Endothelial cell of umbilical vein (primary cell): ENCODE measurements at regions of chr3 and their contacts with region 1.

Region 1: DNA sequence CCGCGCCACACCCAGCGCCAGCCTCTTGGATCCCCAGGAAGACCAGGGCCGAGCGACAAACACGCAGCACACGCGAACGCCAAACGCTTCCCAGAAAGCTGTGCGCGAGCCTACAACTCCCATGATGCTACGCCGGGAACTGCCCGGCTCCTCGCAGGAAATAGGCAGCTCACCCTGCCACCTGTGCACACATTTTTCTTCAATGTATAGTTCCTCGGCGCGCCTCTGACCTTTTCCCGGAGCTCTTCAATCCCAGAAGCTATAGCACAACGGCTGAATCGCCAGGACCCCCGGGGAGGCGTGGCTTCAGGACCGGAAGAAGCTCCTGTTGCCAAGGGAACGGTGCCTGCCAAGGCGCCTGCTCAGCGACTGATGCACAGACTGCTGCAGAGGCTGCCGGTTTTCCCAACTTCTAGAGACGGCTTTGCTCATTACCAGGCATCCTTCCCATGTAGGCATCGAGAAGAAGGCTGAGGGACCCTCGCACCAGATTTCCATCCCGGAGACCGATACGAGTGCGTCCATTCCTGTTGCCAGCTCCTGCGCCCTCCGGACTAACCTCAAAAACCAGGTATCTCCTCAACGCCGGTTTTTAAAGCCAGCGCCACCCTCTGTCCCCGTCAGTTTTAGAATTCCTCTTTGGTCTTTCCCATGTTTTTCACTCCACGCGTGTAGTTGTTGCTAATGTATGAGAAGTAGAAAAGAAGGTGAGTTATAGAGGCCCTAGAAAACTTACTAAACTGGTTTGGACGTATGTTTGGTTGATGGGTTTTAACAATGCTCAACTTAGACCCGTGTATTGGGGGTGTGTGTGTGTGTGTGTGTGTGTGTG is at the start of gene ARL6:
- DNase-seq: peak; percentile 87
- H3K4me3 ChIP-seq: peak within 1 kb of the TSS; percentile 32 to 83 (median 77)
- H3K27ac ChIP-seq: peak within 1 kb of the TSS; percentile 6
- H3K4me1 ChIP-seq: no peaks in the 10 kb centered on the region
- H3K27me3 ChIP-seq: no peaks in the 10 kb centered on the region
- CTCF ChIP-seq: no peak
- POLR2A ChIP-seq: peak; percentile 59
- total RNA-seq, gene ARL6: 5.8 and 6.1 TPM in 2 replicates

Region 2: DNA sequence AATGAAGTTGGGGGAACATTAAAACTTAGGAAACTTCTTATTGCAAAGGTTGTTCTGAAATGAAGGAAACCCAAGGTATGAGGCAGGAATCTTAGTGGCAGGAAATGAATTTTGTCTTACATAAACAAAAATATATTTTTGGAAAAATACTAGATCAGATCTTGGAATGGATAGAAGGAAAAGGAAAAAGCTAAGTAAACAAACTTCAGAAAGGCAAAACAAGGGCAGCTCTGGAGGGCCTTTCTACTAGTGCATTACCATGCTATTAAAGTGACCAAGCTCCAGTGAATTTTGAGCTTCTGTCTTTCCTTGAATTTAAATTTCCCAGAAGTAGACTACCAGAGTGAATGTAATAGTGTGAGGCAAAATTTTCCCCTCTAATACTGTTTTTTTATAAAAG is 13.5 kb after region 1 on chr3:
- CTCF ChIA-PET with region 1: interaction called, 9 read pairs
- POLR2A ChIA-PET with region 1: no interaction called
- dilution Hi-C with region 1: no loop called
- intact Hi-C with region 1: loop called (anchors 1 kb)
- DNase-seq: peak; percentile 74
- H3K4me3 ChIP-seq: no peak overlapping the region
- H3K27ac ChIP-seq: peak overlapping the region; percentile 37
- H3K4me1 ChIP-seq: peaks cover 19% of the 10 kb centered on the region
- H3K27me3 ChIP-seq: no peaks in the 10 kb centered on the region
- CTCF ChIP-seq: no peak
- POLR2A ChIP-seq: no peak

Region 3: DNA sequence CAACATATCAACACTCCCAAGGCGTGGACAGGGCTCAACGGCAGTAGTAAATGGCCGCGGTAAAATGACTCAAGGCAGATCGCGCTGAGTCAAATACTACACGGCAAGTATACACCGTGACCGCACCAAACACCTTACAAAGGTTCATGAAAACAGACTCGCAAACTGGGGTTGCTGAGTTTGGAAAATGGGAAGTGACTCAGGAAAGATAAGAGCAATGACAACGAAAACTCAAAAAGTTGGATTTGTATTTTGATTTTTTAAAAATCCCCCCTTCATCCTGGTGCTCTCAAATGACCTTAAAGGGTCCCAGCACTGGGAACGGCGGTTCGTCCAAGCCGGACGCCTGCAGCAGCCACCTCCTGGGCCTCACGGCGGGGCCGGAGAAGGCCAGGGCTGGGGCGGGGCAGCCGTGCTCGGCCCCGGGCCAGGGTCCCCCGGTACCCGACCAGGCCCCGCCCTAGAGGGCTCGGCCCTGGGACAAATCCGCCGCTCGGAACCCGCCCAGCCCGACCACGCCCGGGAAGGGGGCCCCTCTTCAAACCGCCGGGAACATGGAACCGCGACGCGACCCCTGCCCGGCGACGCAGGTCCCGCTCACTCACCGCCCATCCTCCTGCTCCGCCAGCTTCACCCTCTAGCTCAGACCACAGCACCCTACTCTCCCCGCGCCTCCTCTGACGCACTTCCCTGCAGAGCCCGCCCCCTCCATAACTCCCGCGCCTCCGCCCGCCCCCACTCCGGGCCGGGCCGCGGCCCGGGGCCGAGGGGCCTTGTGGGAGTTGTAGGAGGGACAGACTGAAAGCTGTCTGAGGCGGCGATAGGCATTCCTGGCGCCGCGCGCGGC is 757.8 kb after region 1 on chr3 and contains the start of gene CLDND1:
- CTCF ChIA-PET with region 1: no interaction called
- POLR2A ChIA-PET with region 1: no interaction called
- dilution Hi-C with region 1: no loop called
- intact Hi-C with region 1: loop called (anchors 10 kb)
- DNase-seq: peak; percentile 98
- H3K4me3 ChIP-seq: peak within 1 kb of the TSS; percentile 86 to 97 (median 94)
- H3K27ac ChIP-seq: peak within 1 kb of the TSS; percentile 94
- H3K4me1 ChIP-seq: peaks cover 13% of the 10 kb centered on the region
- H3K27me3 ChIP-seq: peaks cover 0 to 2% of the 10 kb centered on the region in 2 experiments
- CTCF ChIP-seq: no peak
- POLR2A ChIP-seq: peak; percentile 81
- total RNA-seq, gene CLDND1: 93.1 and 101 TPM in 2 replicates